ENCODE measurements at regions of chr5 and their contacts with region 1.

Region 1: DNA sequence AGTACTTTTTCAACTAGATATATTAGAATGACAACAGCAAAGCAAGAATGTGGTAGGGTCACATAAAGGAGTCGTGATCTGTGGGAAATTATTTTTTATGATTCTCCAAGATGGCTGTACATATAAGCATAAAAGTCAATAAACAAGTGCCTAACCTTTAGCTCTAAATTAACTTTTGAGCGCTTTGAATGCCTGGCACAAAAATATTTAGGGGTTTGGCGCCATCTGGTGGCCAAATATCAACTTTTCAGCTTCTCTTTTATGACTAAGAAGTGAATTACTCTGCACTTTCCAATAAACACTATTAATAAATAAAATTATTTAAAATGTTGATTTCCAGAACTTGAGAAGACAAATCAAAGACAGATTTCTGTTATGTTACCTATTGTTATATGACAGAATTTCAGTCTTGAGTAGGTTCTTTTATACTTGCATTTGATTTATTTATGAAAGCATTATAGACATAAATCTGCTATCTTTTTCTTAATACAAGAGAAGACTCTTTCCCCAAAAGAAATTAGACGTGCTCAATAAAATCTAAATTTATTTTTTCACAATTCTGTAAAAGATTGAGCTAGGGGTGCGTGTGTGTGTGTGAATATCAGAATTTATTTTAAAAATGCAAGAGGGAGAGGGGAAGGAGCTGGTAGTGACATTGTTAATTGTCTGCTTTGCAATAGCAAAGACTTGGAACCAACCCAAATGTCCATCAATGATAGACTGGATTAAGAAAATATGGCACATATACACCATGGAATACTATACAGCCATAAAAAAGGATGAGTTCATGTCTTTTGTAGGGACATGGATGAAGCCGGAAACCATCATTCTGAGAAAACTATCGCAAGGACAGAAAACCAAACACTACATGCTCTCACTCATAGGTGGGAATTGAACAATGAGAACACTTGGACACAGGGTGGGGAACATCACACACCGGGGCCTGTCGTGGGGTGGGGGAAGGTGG is 36.7 kb upstream of the ARRDC3 start:
- DNase-seq: peak; percentile 71 to 89 (median 83)
- H3K4me3 ChIP-seq: no peak overlapping the region
- H3K27ac ChIP-seq: no peak overlapping the region
- H3K4me1 ChIP-seq: peaks cover 0 to 10% (median under 1%) of the 10 kb centered on the region in 4 experiments
- H3K27me3 ChIP-seq: no peaks in the 10 kb centered on the region

Region 2: GRCh38 chr5:90802474-90803317 is 617.2 kb before region 1 on chr5:
- CTCF ChIA-PET with region 1: interaction called, 13 read pairs
- POLR2A ChIA-PET with region 1: no interaction called
- DNase-seq: peak; percentile 25 to 53 (median 43)
- H3K4me3 ChIP-seq: no peak overlapping the region
- H3K27ac ChIP-seq: no peak overlapping the region
- H3K4me1 ChIP-seq: no peaks in the 10 kb centered on the region
- H3K27me3 ChIP-seq: no peaks in the 10 kb centered on the region

Region 3: GRCh38 chr5:90866333-90866732 is 553.5 kb before region 1 on chr5:
- CTCF ChIA-PET with region 1: interaction called, 44 read pairs
- POLR2A ChIA-PET with region 1: no interaction called
- DNase-seq: peak; percentile 26 to 33 (median 31)
- H3K4me3 ChIP-seq: peak overlapping the region in 3 of 7 experiments; percentile 30 to 60 (median 39)
- H3K27ac ChIP-seq: peak overlapping the region in 1 of 2 experiments; percentile 32
- H3K4me1 ChIP-seq: peaks cover 0 to 14% (median 4%) of the 10 kb centered on the region in 4 experiments
- H3K27me3 ChIP-seq: no peaks in the 10 kb centered on the region

Region 4: GRCh38 chr5:90932052-90932699 is 487.7 kb before region 1 on chr5:
- CTCF ChIA-PET with region 1: interaction called, 20 read pairs
- POLR2A ChIA-PET with region 1: no interaction called
- DNase-seq: peak; percentile 42 to 53 (median 49)
- H3K4me3 ChIP-seq: no peak overlapping the region
- H3K27ac ChIP-seq: no peak overlapping the region
- H3K4me1 ChIP-seq: peaks cover 0 to 4% (median 0%) of the 10 kb centered on the region in 4 experiments
- H3K27me3 ChIP-seq: no peaks in the 10 kb centered on the region

Region 5: DNA sequence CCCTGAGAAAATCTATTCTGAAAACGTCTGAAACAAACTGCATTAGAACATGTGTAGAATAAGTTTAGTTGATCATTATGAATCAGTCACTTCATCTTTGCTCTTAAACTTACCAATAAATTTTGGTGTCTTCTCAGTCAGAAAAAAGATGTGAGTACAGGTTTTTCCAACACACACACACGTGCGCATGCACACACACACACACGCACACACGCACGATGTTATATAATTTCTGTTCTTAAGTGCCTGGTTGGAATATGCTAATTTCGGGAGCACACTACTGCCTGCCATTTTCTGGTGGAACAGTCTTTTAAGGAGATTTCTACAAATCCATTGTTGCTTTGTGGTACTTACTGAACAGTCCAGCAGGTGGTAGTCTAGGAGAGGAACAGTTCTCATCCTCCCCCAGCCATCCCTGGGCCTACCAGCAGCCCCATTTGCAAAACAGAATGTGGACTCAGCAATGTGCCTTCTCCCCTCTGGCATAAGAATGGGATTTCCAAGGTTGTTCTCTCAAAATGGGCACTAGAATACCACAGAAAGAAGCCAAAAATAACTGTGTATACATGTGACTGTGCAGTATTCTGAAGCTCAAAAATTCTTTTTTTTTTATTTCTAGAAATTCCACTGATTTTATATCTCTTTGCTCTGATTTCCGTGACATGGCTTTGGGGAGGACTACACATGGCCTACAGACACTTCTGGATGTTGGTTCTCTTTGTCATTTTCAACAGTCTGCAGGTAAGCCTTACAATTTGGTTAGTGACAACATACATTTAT is 318.1 kb before region 1 on chr5:
- CTCF ChIA-PET with region 1: interaction called, 10 read pairs
- POLR2A ChIA-PET with region 1: no interaction called
- DNase-seq: peak; percentile 80 to 88 (median 84)
- H3K4me3 ChIP-seq: peak overlapping the region in 2 of 7 experiments; percentile 24 to 61
- H3K27ac ChIP-seq: no peak overlapping the region
- H3K4me1 ChIP-seq: peaks cover 0 to 2% (median 0%) of the 10 kb centered on the region in 4 experiments
- H3K27me3 ChIP-seq: no peaks in the 10 kb centered on the region

Region 6: DNA sequence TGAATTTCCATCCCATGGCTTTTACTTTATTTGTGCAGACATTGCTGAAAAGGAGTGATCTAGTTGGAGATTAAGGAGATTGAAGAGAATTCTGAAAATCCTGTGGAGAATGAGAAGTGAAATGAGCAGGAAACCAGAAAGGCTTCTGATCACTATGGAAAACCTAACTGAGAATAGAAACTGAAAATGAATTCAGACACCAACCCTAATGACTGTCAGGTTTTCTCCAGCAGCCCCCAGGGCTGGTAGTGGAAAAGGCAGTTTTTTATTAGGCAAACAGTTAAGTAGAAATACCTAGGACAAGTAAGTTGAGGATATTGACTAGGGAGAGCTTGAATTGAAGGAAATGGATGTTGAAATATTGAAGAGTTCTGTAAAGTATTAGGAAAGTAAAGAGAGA is 22.1 kb before region 1 on chr5:
- CTCF ChIA-PET with region 1: no interaction called
- POLR2A ChIA-PET with region 1: no interaction called
- DNase-seq: no peak
- H3K4me3 ChIP-seq: no peak overlapping the region
- H3K27ac ChIP-seq: no peak overlapping the region
- H3K4me1 ChIP-seq: peaks cover 0 to 4% (median 0%) of the 10 kb centered on the region in 4 experiments
- H3K27me3 ChIP-seq: no peaks in the 10 kb centered on the region

Region 7: DNA sequence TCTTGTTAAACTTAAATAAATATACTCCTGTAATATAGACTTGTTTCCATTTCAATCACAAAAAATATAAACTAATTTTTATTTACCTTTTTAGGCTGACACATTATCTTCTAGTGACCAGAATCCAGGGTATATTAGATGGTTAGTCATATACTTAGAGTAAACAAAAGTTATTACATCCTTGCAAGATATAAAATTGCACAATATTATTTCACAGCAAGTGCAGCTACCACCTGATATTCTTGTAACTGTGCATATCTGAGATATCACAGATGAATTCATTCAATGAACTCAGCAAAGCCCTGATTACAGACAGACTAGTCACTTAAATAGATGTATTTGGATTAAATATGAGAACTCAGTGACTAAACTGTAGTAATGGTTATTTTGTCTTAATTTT is 11.1 kb before region 1 on chr5:
- CTCF ChIA-PET with region 1: interaction called, 12 read pairs
- POLR2A ChIA-PET with region 1: no interaction called
- DNase-seq: no peak
- H3K4me3 ChIP-seq: no peak overlapping the region
- H3K27ac ChIP-seq: no peak overlapping the region
- H3K4me1 ChIP-seq: peaks cover 0 to 1% (median 0%) of the 10 kb centered on the region in 4 experiments
- H3K27me3 ChIP-seq: no peaks in the 10 kb centered on the region

Region 8: GRCh38 chr5:91430949-91431348 is 11.1 kb after region 1 on chr5:
- CTCF ChIA-PET with region 1: interaction called, 20 read pairs
- POLR2A ChIA-PET with region 1: no interaction called
- DNase-seq: no peak
- H3K4me3 ChIP-seq: no peak overlapping the region
- H3K27ac ChIP-seq: no peak overlapping the region
- H3K4me1 ChIP-seq: peaks cover 0 to 10% (median 2%) of the 10 kb centered on the region in 4 experiments
- H3K27me3 ChIP-seq: no peaks in the 10 kb centered on the region

Measured in common myeloid progenitor, CD34-positive (primary cell).